GM13977 (cell line): ENCODE measurements at regions of chr14 and their contacts with region 1.

Region 1: GRCh38 chr14:105861985-105862465 is 335.6 kb downstream of the TMEM121 start:
- DNase-seq: peak; percentile 82
- CTCF ChIP-seq: no peak

Region 2: GRCh38 chr14:105517096-105517495 is 344.9 kb before region 1 on chr14:
- in situ Hi-C with region 1: no loop called
- DNase-seq: no peak
- CTCF ChIP-seq: no peak

Region 3: DNA sequence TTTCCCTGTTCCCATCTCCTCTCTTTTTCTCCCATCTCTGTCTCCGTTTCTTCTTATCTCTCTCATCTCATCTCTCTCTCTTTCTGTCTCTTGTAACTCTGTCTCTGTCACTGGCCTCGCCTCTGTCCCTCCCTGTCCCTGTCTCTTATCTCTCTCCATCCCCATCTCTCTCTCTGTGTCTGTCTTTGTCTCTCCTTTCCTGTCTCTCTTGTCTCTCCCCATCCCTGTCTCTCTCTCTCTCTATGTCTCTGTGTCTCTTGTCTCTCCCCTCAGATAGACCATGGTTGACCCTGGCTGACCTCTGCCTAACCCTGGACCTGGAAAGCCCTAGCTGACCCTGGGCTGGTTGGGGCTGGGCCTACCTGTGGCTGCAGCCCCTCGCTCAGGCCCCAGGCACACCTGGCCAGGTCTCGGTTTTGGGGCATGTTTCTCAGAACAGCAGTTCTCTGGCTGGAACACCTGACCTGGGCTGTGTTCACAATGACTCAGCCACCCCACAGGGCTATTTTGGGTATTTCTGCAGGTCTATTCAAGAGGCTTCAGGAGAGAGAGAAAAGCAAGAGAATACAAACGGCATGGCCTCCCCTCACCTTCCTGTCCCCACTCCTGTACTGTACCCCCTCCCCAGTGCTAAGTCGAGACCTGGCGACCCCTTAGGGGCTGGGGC is 161.3 kb before region 1 on chr14:
- in situ Hi-C with region 1: loop called (anchors 25 kb)
- DNase-seq: peak; percentile 81
- CTCF ChIP-seq: no peak